HepG2 (cell line): ENCODE measurements at regions of chr1 and their contacts with region 1.

Region 1: GRCh38 chr1:12380326-12381249 is 150.8 kb downstream of the VPS13D start:
- DNase-seq: peak; percentile 54
- ATAC-seq: peak; percentile 25
- H3K4me3 ChIP-seq: peak overlapping the region in 1 of 3 experiments; percentile 57; a peak in 1 of 6 replicates
- H3K27ac ChIP-seq: peak overlapping the region; percentile 99
- H3K4me1 ChIP-seq: peaks cover 67% of the 10 kb centered on the region
- H3K27me3 ChIP-seq: no peaks in the 10 kb centered on the region
- CTCF ChIP-seq: no peak
- EP300 ChIP-seq: peak in 1 of 2 experiments; percentile 19; a peak in 1 of 4 replicates
- POLR2A ChIP-seq: 0 out of 4 replicates have a peak, but pooled peaks of 1 of the 2 experiments have one; percentile 31
- RAD21 ChIP-seq: no peak

Region 2: GRCh38 chr1:11934302-11935056 is 446.1 kb before region 1 on chr1 and contains the start of gene PLOD1:
- CTCF ChIA-PET with region 1: no interaction called
- POLR2A ChIA-PET with region 1: no interaction called
- in situ Hi-C with region 1: no loop called
- intact Hi-C with region 1: loop called (anchors 5 kb)
- DNase-seq: peak; percentile 79
- ATAC-seq: peak; percentile 95
- H3K4me3 ChIP-seq: peak within 1 kb of the TSS; percentile 77 to 89 (median 82)
- H3K27ac ChIP-seq: peak within 1 kb of the TSS; percentile 84
- H3K4me1 ChIP-seq: peaks cover 73% of the 10 kb centered on the region
- H3K27me3 ChIP-seq: no peaks in the 10 kb centered on the region; a peak in 1 of 5 replicates
- CTCF ChIP-seq: no peak; the same call in 1 of the 2 replicates
- EP300 ChIP-seq: no peak
- POLR2A ChIP-seq: peak; percentile 59 to 91
- RAD21 ChIP-seq: peak; percentile 44; the same call in 1 of the 2 replicates
- total RNA-seq, gene PLOD1: 31.0 and 70.1 TPM in 2 replicates

Region 3: GRCh38 chr1:12356004-12356890 is 24.3 kb before region 1 on chr1:
- CTCF ChIA-PET with region 1: no interaction called
- POLR2A ChIA-PET with region 1: interaction called, 20 read pairs
- in situ Hi-C with region 1: no loop called
- intact Hi-C with region 1: no loop called
- DNase-seq: peak; percentile 89
- ATAC-seq: peak; percentile 87
- H3K4me3 ChIP-seq: no peak overlapping the region
- H3K27ac ChIP-seq: peak overlapping the region; percentile 30
- H3K4me1 ChIP-seq: peaks cover 22% of the 10 kb centered on the region
- H3K27me3 ChIP-seq: no peaks in the 10 kb centered on the region
- CTCF ChIP-seq: no peak
- EP300 ChIP-seq: peak in 1 of 2 experiments; percentile 65; a peak in 2 of 4 replicates
- POLR2A ChIP-seq: no peak
- RAD21 ChIP-seq: no peak

Region 4: DNA sequence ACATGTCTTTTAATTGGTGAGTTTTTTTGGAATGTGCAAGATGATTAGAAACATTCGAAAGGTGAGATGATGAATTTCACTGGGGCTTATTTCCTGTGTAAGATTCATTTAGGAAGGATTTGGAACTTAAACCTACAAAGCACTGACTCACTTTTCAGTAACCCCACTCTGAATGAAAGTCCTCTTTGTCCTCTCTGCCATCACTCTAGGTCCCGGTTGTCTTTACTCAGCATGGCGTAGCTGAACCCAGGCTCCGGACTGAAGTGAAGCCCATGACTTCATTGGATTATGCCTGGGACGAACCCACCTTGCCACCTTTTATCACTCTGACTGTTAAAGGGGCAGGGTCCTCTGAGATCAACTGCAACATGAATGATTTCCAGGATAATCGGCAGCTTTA is 11.3 kb before region 1 on chr1:
- CTCF ChIA-PET with region 1: no interaction called
- POLR2A ChIA-PET with region 1: interaction called, 13 read pairs
- in situ Hi-C with region 1: no loop called
- intact Hi-C with region 1: no loop called
- DNase-seq: peak; percentile 66
- ATAC-seq: no peak
- H3K4me3 ChIP-seq: no peak overlapping the region
- H3K27ac ChIP-seq: peak overlapping the region; percentile 10
- H3K4me1 ChIP-seq: peaks cover 22% of the 10 kb centered on the region
- H3K27me3 ChIP-seq: no peaks in the 10 kb centered on the region
- CTCF ChIP-seq: no peak
- EP300 ChIP-seq: no peak
- POLR2A ChIP-seq: no peak
- RAD21 ChIP-seq: no peak

Region 5: GRCh38 chr1:12397462-12398450 is 17.2 kb after region 1 on chr1:
- CTCF ChIA-PET with region 1: interaction called, 3 read pairs
- POLR2A ChIA-PET with region 1: interaction called, 126 read pairs
- in situ Hi-C with region 1: no loop called
- intact Hi-C with region 1: loop called (anchors 1 kb)
- DNase-seq: no peak
- ATAC-seq: no peak
- H3K4me3 ChIP-seq: no peak overlapping the region
- H3K27ac ChIP-seq: no peak overlapping the region
- H3K4me1 ChIP-seq: peaks cover 57% of the 10 kb centered on the region
- H3K27me3 ChIP-seq: no peaks in the 10 kb centered on the region
- CTCF ChIP-seq: no peak
- EP300 ChIP-seq: no peak
- POLR2A ChIP-seq: no peak
- RAD21 ChIP-seq: no peak